ENCODE measurements at regions of chrX and their contacts with region 1.

Region 1: GRCh38 chrX:64218023-64218422 is 12.4 kb downstream of the ASB12 start:
- DNase-seq: no peak
- ATAC-seq: no peak
- H3K4me3 ChIP-seq: no peak overlapping the region
- H3K27ac ChIP-seq: no peak overlapping the region
- H3K4me1 ChIP-seq: no peaks in the 10 kb centered on the region
- H3K27me3 ChIP-seq: no peaks in the 10 kb centered on the region
- CTCF ChIP-seq: no peak
- POLR2A ChIP-seq: no peak
- RAD21 ChIP-seq: no peak

Region 2: GRCh38 chrX:63525491-63525890 is 692.5 kb before region 1 on chrX:
- CTCF ChIA-PET with region 1: no interaction called
- POLR2A ChIA-PET with region 1: no interaction called
- RAD21 ChIA-PET with region 1: no interaction called
- intact Hi-C with region 1: no loop called
- DNase-seq: no peak
- ATAC-seq: no peak
- H3K4me3 ChIP-seq: no peak overlapping the region
- H3K27ac ChIP-seq: no peak overlapping the region
- H3K4me1 ChIP-seq: no peaks in the 10 kb centered on the region
- H3K27me3 ChIP-seq: no peaks in the 10 kb centered on the region
- CTCF ChIP-seq: no peak
- POLR2A ChIP-seq: no peak
- RAD21 ChIP-seq: no peak

Region 3: DNA sequence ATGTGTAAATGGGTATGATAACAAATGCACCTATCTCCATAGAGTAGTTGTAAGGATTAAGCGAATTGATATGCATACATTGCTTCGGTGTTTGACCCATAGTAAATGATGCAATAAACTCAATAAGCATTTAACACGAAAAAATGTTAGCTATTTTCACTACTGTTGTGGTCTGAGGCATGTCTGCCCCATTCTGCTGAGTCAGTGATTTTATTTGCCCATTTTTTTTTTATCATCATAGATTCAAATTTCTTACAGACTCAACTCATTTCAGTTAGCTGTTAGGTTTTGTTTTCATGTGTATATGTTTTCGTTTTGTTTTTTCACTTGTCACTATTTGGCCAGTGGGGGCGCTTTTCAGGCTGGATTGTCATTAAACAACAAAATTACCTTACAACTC is 405.2 kb before region 1 on chrX:
- CTCF ChIA-PET with region 1: no interaction called
- POLR2A ChIA-PET with region 1: no interaction called
- RAD21 ChIA-PET with region 1: no interaction called
- intact Hi-C with region 1: no loop called
- DNase-seq: no peak
- ATAC-seq: no peak
- H3K4me3 ChIP-seq: no peak overlapping the region
- H3K27ac ChIP-seq: no peak overlapping the region
- H3K4me1 ChIP-seq: no peaks in the 10 kb centered on the region
- H3K27me3 ChIP-seq: no peaks in the 10 kb centered on the region
- CTCF ChIP-seq: peak in 2 of 3 experiments; percentile 29 to 51; a peak in 3 of 6 replicates
- POLR2A ChIP-seq: no peak
- RAD21 ChIP-seq: no peak

Region 4: DNA sequence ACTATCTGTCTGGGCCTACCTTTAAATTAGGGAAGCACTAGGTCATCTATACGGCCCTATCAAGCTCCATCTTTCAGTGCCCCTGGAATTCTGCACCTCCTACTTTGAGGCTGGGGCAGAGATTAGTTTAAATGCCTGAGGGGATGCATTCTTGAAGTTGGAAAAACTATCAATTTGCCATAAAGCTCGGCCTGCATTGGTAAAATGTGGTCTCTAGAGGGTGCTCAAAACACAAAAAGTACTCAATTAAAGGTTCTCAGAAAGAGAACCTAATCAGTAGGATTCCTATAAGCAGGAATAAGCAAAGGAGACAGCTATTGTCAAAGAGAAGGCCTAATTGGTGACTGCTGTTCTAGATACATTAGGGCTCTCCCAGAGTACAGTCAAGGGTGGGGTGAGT is 124.3 kb before region 1 on chrX:
- CTCF ChIA-PET with region 1: no interaction called
- POLR2A ChIA-PET with region 1: no interaction called
- RAD21 ChIA-PET with region 1: no interaction called
- intact Hi-C with region 1: loop called (anchors 10 kb)
- DNase-seq: no peak
- ATAC-seq: peak; percentile 47; the same call in 1 of the 2 replicates
- H3K4me3 ChIP-seq: no peak overlapping the region
- H3K27ac ChIP-seq: no peak overlapping the region
- H3K4me1 ChIP-seq: no peaks in the 10 kb centered on the region
- H3K27me3 ChIP-seq: no peaks in the 10 kb centered on the region
- CTCF ChIP-seq: peak in 2 of 3 experiments; percentile 31 to 43; a peak in 3 of 6 replicates
- POLR2A ChIP-seq: no peak
- RAD21 ChIP-seq: peak; percentile 44

Measured in HCT116 (cell line).